ENCODE measurements at regions of chr6 and their contacts with region 1.

Region 1: DNA sequence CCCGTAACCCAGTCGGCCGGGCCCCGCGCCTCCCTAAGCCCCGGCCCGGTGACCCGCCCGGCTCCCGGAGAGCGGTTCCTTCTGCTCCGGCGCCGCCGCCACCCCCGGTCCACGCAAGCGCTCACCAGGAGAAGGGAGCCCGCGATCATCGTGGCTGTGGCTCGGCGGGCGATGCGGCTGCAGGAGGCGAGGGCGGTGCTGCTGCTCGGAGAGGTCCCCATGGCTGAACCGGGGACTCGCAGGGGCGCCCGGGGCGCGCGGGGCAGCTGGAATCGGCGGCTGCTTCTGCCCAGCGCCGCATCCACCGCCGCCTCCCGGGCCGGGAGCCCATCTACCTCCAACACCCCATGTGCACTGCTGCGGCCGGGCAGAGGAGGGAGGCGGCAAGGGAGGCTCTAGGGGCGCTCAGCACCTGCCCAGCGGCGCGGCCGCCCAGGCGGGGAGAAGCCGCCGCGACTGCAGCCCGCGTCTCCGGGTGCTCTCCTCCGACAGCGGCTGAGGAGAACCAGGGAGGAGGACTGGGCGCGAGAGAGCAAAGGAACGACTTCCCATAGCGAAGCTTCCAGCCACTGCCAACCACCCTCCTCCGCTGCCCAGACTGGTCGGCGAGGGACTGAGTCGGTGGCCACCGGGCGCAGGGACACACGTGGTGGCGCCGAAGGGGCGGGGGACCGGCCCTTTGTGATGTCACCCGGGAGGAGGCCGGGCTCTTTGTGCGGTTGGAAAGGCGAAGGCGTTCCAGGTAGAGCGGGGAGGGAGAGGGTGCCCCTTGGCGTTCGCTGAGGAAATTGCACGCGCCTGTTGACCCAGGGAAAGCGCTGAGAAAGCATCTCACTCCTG is at the start of gene TNFRSF21:
- DNase-seq: peak; percentile 82
- ATAC-seq: peak; percentile 91
- H3K4me3 ChIP-seq: peak within 1 kb of the TSS; percentile 84
- H3K27ac ChIP-seq: peak within 1 kb of the TSS; percentile 34; the same call in 1 of the 2 replicates
- H3K4me1 ChIP-seq: no peaks in the 10 kb centered on the region; the same call in 1 of the 2 replicates
- H3K27me3 ChIP-seq: peaks cover 7% of the 10 kb centered on the region; the same call in 1 of the 2 replicates
- CTCF ChIP-seq: peak; percentile 99
- POLR2A ChIP-seq: peak; percentile 31; the same call in 1 of the 2 replicates
- RAD21 ChIP-seq: peak; percentile 99
- total RNA-seq, gene TNFRSF21: 2.5 and 2.9 TPM in 2 replicates

Region 2: DNA sequence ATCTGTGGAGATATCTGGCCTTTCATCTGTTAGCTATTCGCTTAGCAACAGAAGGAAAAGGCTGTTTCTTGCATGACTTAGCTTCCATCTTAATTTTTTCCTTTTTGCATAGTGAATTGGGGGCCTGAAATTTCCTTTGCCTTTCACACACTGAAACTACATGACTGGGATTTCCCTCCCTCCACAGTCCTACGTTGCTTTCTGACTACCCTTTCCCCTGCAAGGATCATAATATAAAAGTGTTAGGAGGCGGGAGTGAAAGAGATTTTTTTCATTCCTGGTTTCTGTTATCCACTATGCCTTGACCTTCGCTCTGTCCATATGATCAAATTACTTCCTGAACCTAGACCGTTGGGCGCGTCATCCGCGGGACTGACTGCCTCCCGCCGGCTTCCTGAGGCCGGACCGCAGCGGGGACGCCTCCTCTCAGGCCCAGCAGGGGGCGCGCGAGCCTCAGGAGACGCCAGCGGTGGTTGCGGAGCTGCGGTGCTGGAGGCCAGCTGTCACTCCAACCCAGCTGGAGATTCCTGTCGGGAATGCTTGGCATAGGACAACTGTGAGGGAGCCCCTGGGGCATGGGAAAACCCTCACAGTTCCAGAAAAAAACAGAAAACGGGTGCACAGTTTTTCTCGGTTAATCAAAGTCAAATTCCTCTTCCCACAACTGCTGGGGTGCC is 460.7 kb before region 1 on chr6:
- CTCF ChIA-PET with region 1: no interaction called
- POLR2A ChIA-PET with region 1: no interaction called
- dilution Hi-C with region 1: no loop called
- in situ Hi-C with region 1: loop called (anchors 25 kb)
- intact Hi-C with region 1: loop called (anchors 5 kb)
- DNase-seq: peak; percentile 55
- ATAC-seq: peak; percentile 100
- H3K4me3 ChIP-seq: no peak overlapping the region
- H3K27ac ChIP-seq: no peak overlapping the region
- H3K4me1 ChIP-seq: no peaks in the 10 kb centered on the region
- H3K27me3 ChIP-seq: peaks cover 2% of the 10 kb centered on the region; the same call in 1 of the 2 replicates
- CTCF ChIP-seq: peak; percentile 90
- POLR2A ChIP-seq: no peak
- RAD21 ChIP-seq: peak; percentile 83

Region 3: GRCh38 chr6:47091886-47092668 is 217.4 kb before region 1 on chr6:
- CTCF ChIA-PET with region 1: interaction called, 22 read pairs
- POLR2A ChIA-PET with region 1: interaction called, 5 read pairs
- dilution Hi-C with region 1: no loop called
- in situ Hi-C with region 1: loop called (anchors 5 kb)
- intact Hi-C with region 1: loop called (anchors 1 kb)
- DNase-seq: no peak
- ATAC-seq: peak; percentile 37; the same call in 1 of the 2 replicates
- H3K4me3 ChIP-seq: no peak overlapping the region
- H3K27ac ChIP-seq: no peak overlapping the region
- H3K4me1 ChIP-seq: no peaks in the 10 kb centered on the region
- H3K27me3 ChIP-seq: peaks cover 6% of the 10 kb centered on the region; the same call in 1 of the 2 replicates
- CTCF ChIP-seq: no peak
- POLR2A ChIP-seq: no peak
- RAD21 ChIP-seq: no peak

Region 4: GRCh38 chr6:47097092-47097945 is 212.2 kb before region 1 on chr6:
- CTCF ChIA-PET with region 1: interaction called, 22 read pairs
- POLR2A ChIA-PET with region 1: interaction called, 5 read pairs
- dilution Hi-C with region 1: no loop called
- in situ Hi-C with region 1: loop called (anchors 5 kb)
- intact Hi-C with region 1: loop called (anchors 1 kb)
- DNase-seq: peak; percentile 85
- ATAC-seq: peak; percentile 90
- H3K4me3 ChIP-seq: no peak overlapping the region
- H3K27ac ChIP-seq: no peak overlapping the region
- H3K4me1 ChIP-seq: no peaks in the 10 kb centered on the region
- H3K27me3 ChIP-seq: 0 out of 2 replicates have a peak, but pooled peaks cover 2% of the 10 kb centered on the region
- CTCF ChIP-seq: peak; percentile 95
- POLR2A ChIP-seq: 0 out of 2 replicates have a peak, but pooled peaks have one; percentile 23
- RAD21 ChIP-seq: peak; percentile 98

Region 5: GRCh38 chr6:47168183-47168582 is 141.3 kb before region 1 on chr6:
- CTCF ChIA-PET with region 1: no interaction called
- POLR2A ChIA-PET with region 1: interaction called, 8 read pairs
- dilution Hi-C with region 1: no loop called
- in situ Hi-C with region 1: no loop called
- intact Hi-C with region 1: loop called (anchors 1 kb)
- DNase-seq: peak; percentile 98
- ATAC-seq: peak; percentile 97
- H3K4me3 ChIP-seq: no peak overlapping the region
- H3K27ac ChIP-seq: peak overlapping the region; percentile 92
- H3K4me1 ChIP-seq: peaks cover 17% of the 10 kb centered on the region
- H3K27me3 ChIP-seq: no peaks in the 10 kb centered on the region
- CTCF ChIP-seq: no peak
- POLR2A ChIP-seq: no peak
- RAD21 ChIP-seq: no peak; the same call in 1 of the 2 replicates

Region 6: DNA sequence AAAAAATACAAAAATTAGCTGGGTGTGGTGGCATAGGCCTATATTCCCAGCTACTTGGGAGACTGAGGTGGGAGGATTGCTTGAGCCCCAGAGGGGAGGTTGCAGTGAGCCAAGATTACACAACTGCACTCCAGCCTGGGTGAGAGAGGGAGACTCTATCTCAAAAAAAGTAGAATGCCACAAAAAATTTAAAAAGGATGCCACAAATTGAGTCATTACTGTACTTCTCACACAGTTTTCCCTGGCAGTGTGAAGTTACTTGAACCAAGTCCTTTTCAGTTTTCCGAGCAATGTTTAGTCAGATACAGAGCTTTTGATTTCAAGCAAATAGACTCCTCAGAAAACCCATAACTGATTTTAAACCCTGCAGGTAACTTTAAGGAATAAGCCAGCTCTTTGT is 53.1 kb before region 1 on chr6:
- CTCF ChIA-PET with region 1: no interaction called
- POLR2A ChIA-PET with region 1: no interaction called
- dilution Hi-C with region 1: no loop called
- in situ Hi-C with region 1: no loop called
- intact Hi-C with region 1: loop called (anchors 5 kb)
- DNase-seq: no peak
- ATAC-seq: no peak; the same call in 1 of the 2 replicates
- H3K4me3 ChIP-seq: no peak overlapping the region
- H3K27ac ChIP-seq: no peak overlapping the region
- H3K4me1 ChIP-seq: no peaks in the 10 kb centered on the region
- H3K27me3 ChIP-seq: no peaks in the 10 kb centered on the region
- CTCF ChIP-seq: no peak
- POLR2A ChIP-seq: no peak
- RAD21 ChIP-seq: no peak

Region 7: DNA sequence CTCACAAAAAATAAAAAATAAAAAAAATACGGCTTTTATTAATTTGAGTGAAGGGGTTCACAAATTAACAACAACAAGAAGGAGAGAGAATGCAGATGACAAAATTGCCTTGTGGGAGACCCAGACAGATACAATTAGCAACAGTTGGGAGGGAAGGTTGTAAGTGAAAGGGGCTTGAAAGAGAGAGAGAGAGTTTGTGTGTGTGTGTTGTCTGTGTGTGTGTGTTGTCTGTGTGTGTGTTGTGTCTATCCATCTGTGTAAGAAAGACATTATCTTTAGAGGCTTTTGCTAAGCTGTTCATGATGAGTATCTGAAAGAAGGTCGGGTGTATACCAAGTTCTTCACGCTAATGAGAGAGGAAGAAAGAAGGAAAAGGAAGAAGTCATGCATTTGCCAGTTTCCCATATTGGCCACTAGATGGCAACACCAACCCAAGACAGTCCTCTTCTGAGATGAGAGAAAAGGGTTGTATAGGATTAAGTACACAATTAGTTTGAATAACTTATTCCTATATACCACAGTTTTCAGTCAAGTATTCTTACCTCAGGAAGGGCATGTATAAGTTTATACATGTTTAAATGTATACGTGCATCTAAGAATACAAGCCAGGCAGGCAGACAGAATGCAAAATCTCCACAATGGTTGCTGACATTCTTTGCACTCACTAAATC is 104.4 kb after region 1 on chr6:
- CTCF ChIA-PET with region 1: no interaction called
- POLR2A ChIA-PET with region 1: no interaction called
- dilution Hi-C with region 1: no loop called
- in situ Hi-C with region 1: no loop called
- intact Hi-C with region 1: no loop called
- DNase-seq: peak; percentile 69
- ATAC-seq: peak; percentile 95
- H3K4me3 ChIP-seq: peak overlapping the region; percentile 25
- H3K27ac ChIP-seq: no peak overlapping the region
- H3K4me1 ChIP-seq: peaks cover 2% of the 10 kb centered on the region; the same call in 1 of the 2 replicates
- H3K27me3 ChIP-seq: no peaks in the 10 kb centered on the region
- CTCF ChIP-seq: peak; percentile 91
- POLR2A ChIP-seq: no peak
- RAD21 ChIP-seq: peak; percentile 82

Measured in IMR-90 (cell line).